ENCODE measurements at regions of chr16 and their contacts with region 1.

Region 1: DNA sequence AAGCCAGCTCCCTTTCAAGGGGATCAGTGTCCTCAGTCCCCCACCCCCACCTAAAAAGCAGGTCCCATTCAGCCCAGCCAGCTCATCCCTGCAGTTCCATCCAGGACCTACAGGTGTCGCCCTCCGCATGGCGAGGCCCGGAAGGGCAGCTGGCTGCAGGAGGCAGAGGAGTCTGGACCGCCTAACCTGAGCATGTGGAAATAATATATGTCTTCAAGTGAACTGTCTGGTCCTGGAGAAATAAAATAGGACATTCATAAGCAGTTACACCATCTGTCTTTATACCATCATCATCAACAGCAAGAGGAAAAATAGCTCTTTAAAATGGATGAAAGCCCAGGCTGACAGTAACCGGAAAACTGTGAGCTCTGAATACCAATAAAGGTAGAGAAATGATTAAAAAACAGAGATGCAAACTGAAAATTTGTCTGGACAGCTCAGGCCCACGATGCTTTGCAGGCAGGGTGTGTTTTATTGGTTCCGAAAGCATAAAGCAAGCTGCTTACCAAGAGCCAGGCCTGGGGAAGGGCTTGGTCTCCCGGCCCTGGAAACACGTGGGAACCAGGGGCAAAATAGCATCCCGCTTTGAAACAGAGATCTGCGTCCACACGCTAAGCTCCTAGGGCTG is 215.2 kb downstream of the ZFHX3 start:
- DNase-seq: peak; percentile 84 to 93
- H3K4me3 ChIP-seq: no peak overlapping the region
- H3K4me3 Mint-ChIP-seq: no peak overlapping the region
- H3K27ac Mint-ChIP-seq: no peak overlapping the region
- H3K4me1 ChIP-seq: peaks cover 17% of the 10 kb centered on the region
- H3K4me1 Mint-ChIP-seq: no peaks in the 10 kb centered on the region
- H3K27me3 ChIP-seq: no peaks in the 10 kb centered on the region
- H3K27me3 Mint-ChIP-seq: no peaks in the 10 kb centered on the region
- CTCF ChIP-seq: peak; percentile 97 to 99

Region 2: DNA sequence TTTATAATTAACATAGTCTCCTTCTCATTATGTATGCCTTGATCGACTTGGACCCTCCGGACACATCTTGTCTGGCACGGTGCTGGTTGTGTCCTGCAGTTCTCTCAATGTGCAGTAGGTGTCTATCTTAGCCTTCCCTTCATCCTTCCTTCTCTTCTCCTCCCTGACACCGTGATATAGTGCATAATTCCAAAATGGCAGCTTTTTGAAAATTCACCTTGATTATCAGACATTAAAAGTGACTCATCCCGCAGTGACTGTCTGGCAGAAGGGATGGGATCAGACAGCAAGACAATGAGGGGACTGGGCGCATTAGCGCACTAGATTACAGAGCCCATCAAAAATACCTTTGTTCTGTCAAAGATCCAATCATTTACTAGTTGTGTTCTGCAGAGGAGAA is 590.8 kb before region 1 on chr16:
- CTCF ChIA-PET with region 1: no interaction called
- POLR2A ChIA-PET with region 1: no interaction called
- intact Hi-C with region 1: loop called (anchors 10 kb)
- DNase-seq: peak in 1 of 2 experiments; percentile 61
- H3K4me3 ChIP-seq: no peak overlapping the region
- H3K4me3 Mint-ChIP-seq: no peak overlapping the region
- H3K27ac Mint-ChIP-seq: no peak overlapping the region
- H3K4me1 ChIP-seq: no peaks in the 10 kb centered on the region
- H3K4me1 Mint-ChIP-seq: no peaks in the 10 kb centered on the region
- H3K27me3 ChIP-seq: no peaks in the 10 kb centered on the region
- H3K27me3 Mint-ChIP-seq: peaks cover 3% of the 10 kb centered on the region
- CTCF ChIP-seq: peak; percentile 84 to 95

Region 3: DNA sequence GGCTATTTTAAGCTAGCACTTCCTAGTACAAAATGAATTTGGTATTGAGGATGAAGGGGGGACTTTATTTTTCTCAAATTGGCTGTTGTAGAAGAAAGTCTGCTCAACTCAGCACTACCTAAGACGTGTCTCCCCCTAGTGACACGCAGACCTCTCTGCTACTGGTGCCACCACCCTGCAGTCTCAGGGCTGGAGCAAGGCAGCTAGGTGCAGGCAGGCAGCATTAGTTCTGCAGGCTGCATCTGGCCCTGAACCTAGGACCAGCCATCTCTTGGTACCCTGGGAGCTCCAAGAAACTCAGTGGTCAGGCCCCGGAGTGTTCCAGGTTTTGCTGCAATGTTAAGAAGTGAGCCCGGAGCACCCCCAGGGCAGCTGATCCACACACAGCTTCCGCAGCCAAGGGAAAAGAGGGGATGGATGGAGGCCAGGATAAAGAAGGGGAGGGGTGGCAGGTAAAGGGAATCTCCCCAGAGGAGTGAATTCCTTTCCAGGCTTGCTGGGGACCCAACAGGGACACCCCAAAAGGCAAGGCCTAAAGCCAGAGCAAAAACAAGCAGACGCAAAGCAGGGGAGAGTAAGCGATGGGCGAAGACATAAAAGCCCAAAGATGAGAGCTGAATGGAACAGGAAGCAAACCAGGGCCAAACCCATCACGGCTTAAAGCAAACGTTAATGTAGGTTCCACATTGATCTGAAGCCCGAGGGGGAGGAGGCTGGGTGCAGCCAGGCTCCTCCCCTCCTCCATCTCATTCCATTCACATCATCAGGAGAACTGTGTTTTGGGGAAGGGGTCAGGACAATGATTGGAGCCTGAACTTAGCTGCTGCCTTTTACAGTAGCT is 14.7 kb after region 1 on chr16:
- CTCF ChIA-PET with region 1: interaction called, 13 read pairs
- POLR2A ChIA-PET with region 1: no interaction called
- intact Hi-C with region 1: no loop called
- DNase-seq: peak; percentile 48 to 51
- H3K4me3 ChIP-seq: no peak overlapping the region
- H3K4me3 Mint-ChIP-seq: no peak overlapping the region
- H3K27ac Mint-ChIP-seq: no peak overlapping the region
- H3K4me1 ChIP-seq: no peaks in the 10 kb centered on the region
- H3K4me1 Mint-ChIP-seq: peaks cover 3% of the 10 kb centered on the region
- H3K27me3 ChIP-seq: no peaks in the 10 kb centered on the region
- H3K27me3 Mint-ChIP-seq: no peaks in the 10 kb centered on the region
- CTCF ChIP-seq: peak; percentile 47 to 66

Region 4: GRCh38 chr16:72876221-72876620 is 43.5 kb after region 1 on chr16:
- CTCF ChIA-PET with region 1: interaction called, 7 read pairs
- POLR2A ChIA-PET with region 1: no interaction called
- intact Hi-C with region 1: loop called (anchors 2 kb)
- DNase-seq: no peak
- H3K4me3 ChIP-seq: no peak overlapping the region
- H3K4me3 Mint-ChIP-seq: peak overlapping the region; percentile 73
- H3K27ac Mint-ChIP-seq: peak overlapping the region; percentile 100
- H3K4me1 ChIP-seq: peaks cover 50% of the 10 kb centered on the region
- H3K4me1 Mint-ChIP-seq: peaks cover 58% of the 10 kb centered on the region
- H3K27me3 ChIP-seq: no peaks in the 10 kb centered on the region
- H3K27me3 Mint-ChIP-seq: no peaks in the 10 kb centered on the region
- CTCF ChIP-seq: no peak

Region 5: GRCh38 chr16:73047518-73048291 is 215.0 kb after region 1 on chr16 and contains the start of gene ZFHX3:
- CTCF ChIA-PET with region 1: interaction called, 8 read pairs
- POLR2A ChIA-PET with region 1: no interaction called
- intact Hi-C with region 1: loop called (anchors 1 kb)
- DNase-seq: peak; percentile 87 to 89
- H3K4me3 ChIP-seq: peak within 1 kb of the TSS; percentile 92
- H3K4me3 Mint-ChIP-seq: peak within 1 kb of the TSS; percentile 73
- H3K27ac Mint-ChIP-seq: peak within 1 kb of the TSS; percentile 77
- H3K4me1 ChIP-seq: peaks cover 66% of the 10 kb centered on the region
- H3K4me1 Mint-ChIP-seq: peaks cover 37% of the 10 kb centered on the region
- H3K27me3 ChIP-seq: no peaks in the 10 kb centered on the region
- H3K27me3 Mint-ChIP-seq: no peaks in the 10 kb centered on the region
- CTCF ChIP-seq: peak in 1 of 2 experiments; percentile 34
- total RNA-seq, gene ZFHX3: 39.9 TPM in 2 replicates

Region 6: GRCh38 chr16:73196670-73197069 is 363.9 kb after region 1 on chr16:
- CTCF ChIA-PET with region 1: interaction called, 4 read pairs
- POLR2A ChIA-PET with region 1: no interaction called
- intact Hi-C with region 1: loop called (anchors 1 kb)
- DNase-seq: peak; percentile 66 to 73
- H3K4me3 ChIP-seq: no peak overlapping the region
- H3K4me3 Mint-ChIP-seq: no peak overlapping the region
- H3K27ac Mint-ChIP-seq: no peak overlapping the region
- H3K4me1 ChIP-seq: no peaks in the 10 kb centered on the region
- H3K4me1 Mint-ChIP-seq: no peaks in the 10 kb centered on the region
- H3K27me3 ChIP-seq: no peaks in the 10 kb centered on the region
- H3K27me3 Mint-ChIP-seq: no peaks in the 10 kb centered on the region
- CTCF ChIP-seq: peak; percentile 71 to 74

Measured in Caco-2 (cell line).